ENCODE measurements at regions of chr3 and their contacts with region 1.

Region 1: GRCh38 chr3:133573054-133573628 is 345 bp upstream of the CDV3 start:
- DNase-seq: peak; percentile 100
- H3K4me3 Mint-ChIP-seq: peak overlapping the region; percentile 87
- H3K27ac Mint-ChIP-seq: peak overlapping the region; percentile 100
- H3K4me1 Mint-ChIP-seq: peaks cover 43% of the 10 kb centered on the region
- H3K27me3 Mint-ChIP-seq: no peaks in the 10 kb centered on the region

Region 2: GRCh38 chr3:132659365-132660051 is 913.6 kb before region 1 on chr3 and contains the start of gene ACAD11:
- CTCF ChIA-PET with region 1: no interaction called
- intact Hi-C with region 1: loop called (anchors 2 kb)
- DNase-seq: peak; percentile 64
- H3K4me3 Mint-ChIP-seq: peak within 1 kb of the TSS; percentile 95
- H3K27ac Mint-ChIP-seq: peak within 1 kb of the TSS; percentile 94
- H3K4me1 Mint-ChIP-seq: peaks cover 44% of the 10 kb centered on the region
- H3K27me3 Mint-ChIP-seq: no peaks in the 10 kb centered on the region
- total RNA-seq, gene ACAD11: 11.2 to 11.4 TPM

Region 3: GRCh38 chr3:133475245-133476010 is 97.7 kb before region 1 on chr3:
- CTCF ChIA-PET with region 1: interaction called, 8 read pairs
- intact Hi-C with region 1: loop called (anchors 1 kb)
- DNase-seq: peak; percentile 46
- H3K4me3 Mint-ChIP-seq: no peak overlapping the region
- H3K27ac Mint-ChIP-seq: peak overlapping the region; percentile 59
- H3K4me1 Mint-ChIP-seq: peaks cover 48% of the 10 kb centered on the region
- H3K27me3 Mint-ChIP-seq: no peaks in the 10 kb centered on the region

Region 4: DNA sequence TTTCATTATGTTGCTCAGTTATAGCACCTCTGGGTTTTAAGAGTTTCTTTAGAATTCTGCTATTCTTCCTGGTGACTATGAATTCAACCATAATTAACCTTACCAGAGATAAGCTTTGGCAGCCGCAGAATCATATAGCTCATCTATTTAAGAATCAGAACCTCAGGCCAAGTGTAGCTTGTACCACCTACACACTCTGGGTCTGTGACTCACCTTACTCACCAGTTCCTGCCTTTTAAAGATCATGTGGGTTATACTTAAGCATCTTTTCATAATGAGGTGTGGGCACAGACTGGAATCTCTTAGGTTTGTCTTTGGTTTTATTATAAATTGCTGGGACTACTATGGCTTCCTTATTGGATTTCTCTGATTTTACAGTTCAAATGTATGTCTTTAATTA is 22.2 kb after region 1 on chr3:
- CTCF ChIA-PET with region 1: interaction called, 4 read pairs
- intact Hi-C with region 1: loop called (anchors 1 kb)
- DNase-seq: peak; percentile 49
- H3K4me3 Mint-ChIP-seq: no peak overlapping the region
- H3K27ac Mint-ChIP-seq: no peak overlapping the region
- H3K4me1 Mint-ChIP-seq: peaks cover 21% of the 10 kb centered on the region
- H3K27me3 Mint-ChIP-seq: no peaks in the 10 kb centered on the region

Region 5: GRCh38 chr3:133927540-133928066 is 354.5 kb after region 1 on chr3:
- CTCF ChIA-PET with region 1: no interaction called
- intact Hi-C with region 1: loop called (anchors 5 kb)
- DNase-seq: peak; percentile 60
- H3K4me3 Mint-ChIP-seq: no peak overlapping the region
- H3K27ac Mint-ChIP-seq: no peak overlapping the region
- H3K4me1 Mint-ChIP-seq: peaks cover 6% of the 10 kb centered on the region
- H3K27me3 Mint-ChIP-seq: peaks cover 2% of the 10 kb centered on the region

Region 6: DNA sequence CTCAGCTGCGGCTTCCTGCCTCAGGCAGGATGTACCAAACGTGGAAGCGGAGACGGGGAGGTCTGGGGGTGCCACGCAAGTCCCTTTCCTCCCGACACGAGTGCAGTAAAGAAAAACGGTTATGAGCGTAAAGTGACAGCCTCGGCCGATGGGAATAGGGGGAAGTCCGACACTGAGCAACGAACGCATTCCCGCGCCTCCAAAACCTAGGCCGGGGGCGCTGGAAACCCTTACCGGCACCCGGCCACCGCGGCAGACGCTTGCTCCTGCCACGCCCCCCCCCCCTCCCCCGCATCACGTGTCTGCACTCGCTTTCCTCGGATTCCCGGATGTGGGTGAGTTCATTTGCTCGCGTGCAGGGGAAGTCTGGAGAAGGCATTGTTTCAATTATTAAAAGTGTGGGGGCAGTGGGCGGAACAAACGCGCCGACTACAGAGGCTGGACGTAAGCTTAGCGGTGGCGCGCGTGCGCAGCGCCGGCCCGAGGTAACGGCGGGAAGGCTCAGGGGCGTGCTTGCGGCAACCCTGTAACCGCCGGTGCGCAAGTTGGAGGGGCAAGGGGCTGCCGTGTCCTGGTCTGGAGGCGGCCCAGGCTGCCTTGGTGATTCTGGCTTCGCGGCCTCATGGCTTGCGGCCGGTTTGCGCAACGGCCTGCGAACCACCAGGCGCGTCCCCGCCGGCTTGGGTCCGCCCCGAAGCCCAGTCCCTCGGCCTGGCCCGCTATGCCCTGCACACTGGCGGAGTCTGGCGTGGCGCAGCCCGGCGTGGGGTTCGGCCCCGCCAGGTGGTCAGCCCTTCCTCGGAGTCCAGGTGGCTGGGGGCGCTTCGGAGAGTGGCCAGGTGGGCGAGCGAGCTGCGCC is 912.8 kb after region 1 on chr3 and contains the starts of genes ANAPC13 and CEP63:
- CTCF ChIA-PET with region 1: no interaction called
- intact Hi-C with region 1: loop called (anchors 1 kb)
- DNase-seq: peak; percentile 97
- H3K4me3 Mint-ChIP-seq: peak within 1 kb of the TSS; percentile 87
- H3K27ac Mint-ChIP-seq: peak within 1 kb of the TSS; percentile 98
- H3K4me1 Mint-ChIP-seq: peaks cover 45% of the 10 kb centered on the region
- H3K27me3 Mint-ChIP-seq: no peaks in the 10 kb centered on the region
- total RNA-seq, gene ANAPC13: 42.6 to 44.7 TPM
- total RNA-seq, gene CEP63: 26.9 to 27.0 TPM